H1 (cell line): ENCODE measurements at regions of chr11 and their contacts with region 1.

Region 1: DNA sequence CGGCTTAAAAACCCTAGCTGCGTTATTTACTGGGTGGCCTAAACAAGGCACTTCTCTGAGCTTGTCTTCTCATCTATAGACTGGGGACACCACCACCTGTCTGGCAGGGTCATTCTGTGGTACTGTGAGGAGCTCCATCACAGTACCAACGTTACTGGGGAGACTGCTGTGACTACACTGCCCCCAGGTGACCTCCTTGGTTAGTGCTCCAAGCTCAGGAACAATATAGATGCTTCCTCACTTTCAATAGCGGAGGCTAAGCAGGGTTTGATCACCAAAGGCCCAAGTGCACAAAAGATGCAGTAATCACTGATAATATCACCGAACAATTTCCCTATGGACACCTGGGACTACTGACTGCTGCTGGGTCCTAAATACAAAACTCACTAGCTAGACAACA is 18.8 kb downstream of the PRPF19 start:
- DNase-seq: peak in 1 of 2 experiments; percentile 60
- H3K4me3 ChIP-seq: no peak overlapping the region
- H3K27ac ChIP-seq: no peak overlapping the region
- H3K4me1 ChIP-seq: no peaks in the 10 kb centered on the region
- H3K27me3 ChIP-seq: no peaks in the 10 kb centered on the region
- CTCF ChIP-seq: peak; percentile 54 to 85 (median 84)
- EP300 ChIP-seq: no peak
- POLR2A ChIP-seq: no peak
- RAD21 ChIP-seq: peak; percentile 92 to 93

Region 2: GRCh38 chr11:60725592-60725991 is 162.0 kb before region 1 on chr11:
- CTCF ChIA-PET with region 1: no interaction called
- POLR2A ChIA-PET with region 1: no interaction called
- DNase-seq: no peak
- H3K4me3 ChIP-seq: no peak overlapping the region
- H3K27ac ChIP-seq: no peak overlapping the region
- H3K4me1 ChIP-seq: no peaks in the 10 kb centered on the region
- H3K27me3 ChIP-seq: no peaks in the 10 kb centered on the region; a peak in 2 of 7 replicates
- CTCF ChIP-seq: no peak
- EP300 ChIP-seq: no peak
- POLR2A ChIP-seq: no peak
- RAD21 ChIP-seq: no peak

Region 3: DNA sequence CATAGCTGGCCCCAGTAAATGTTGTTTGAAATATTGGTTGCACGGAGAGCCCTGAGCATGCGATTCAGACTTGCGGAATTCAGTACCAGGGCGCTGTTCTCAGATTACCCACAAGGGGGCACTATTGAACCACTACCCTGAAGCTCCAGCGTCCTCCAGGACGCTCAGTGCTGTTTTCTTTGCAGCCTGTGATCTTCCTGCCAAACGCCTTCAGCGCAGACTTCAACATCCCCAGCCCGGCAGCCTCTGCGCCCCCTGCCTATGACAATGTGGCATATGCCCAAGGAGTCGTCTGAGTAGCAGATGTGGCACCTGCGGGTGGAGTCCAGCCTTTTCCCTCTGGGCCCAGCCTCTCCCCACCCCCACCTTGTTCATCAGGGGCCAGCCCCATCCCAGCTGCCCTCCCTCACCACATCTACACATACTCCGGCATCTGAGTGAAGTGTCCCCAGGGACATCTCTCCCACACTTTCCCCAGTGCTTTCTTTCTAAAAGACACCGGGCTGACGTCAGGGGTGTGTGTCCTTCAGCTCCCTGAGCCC is 112.1 kb before region 1 on chr11:
- CTCF ChIA-PET with region 1: interaction called, 31 read pairs
- POLR2A ChIA-PET with region 1: interaction called, 5 read pairs
- DNase-seq: peak; percentile 90 to 94
- H3K4me3 ChIP-seq: no peak overlapping the region
- H3K27ac ChIP-seq: no peak overlapping the region
- H3K4me1 ChIP-seq: no peaks in the 10 kb centered on the region; a peak in 1 of 7 replicates
- H3K27me3 ChIP-seq: no peaks in the 10 kb centered on the region
- CTCF ChIP-seq: peak; percentile 65 to 96 (median 93)
- EP300 ChIP-seq: no peak
- POLR2A ChIP-seq: no peak
- RAD21 ChIP-seq: peak; percentile 81 to 86

Region 4: GRCh38 chr11:60821827-60822599 is 65.5 kb before region 1 on chr11:
- CTCF ChIA-PET with region 1: interaction called, 522 read pairs
- POLR2A ChIA-PET with region 1: no interaction called
- DNase-seq: no peak
- H3K4me3 ChIP-seq: no peak overlapping the region
- H3K27ac ChIP-seq: no peak overlapping the region
- H3K4me1 ChIP-seq: no peaks in the 10 kb centered on the region; a peak in 1 of 7 replicates
- H3K27me3 ChIP-seq: no peaks in the 10 kb centered on the region; a peak in 1 of 7 replicates
- CTCF ChIP-seq: no peak
- EP300 ChIP-seq: no peak
- POLR2A ChIP-seq: no peak
- RAD21 ChIP-seq: no peak

Region 5: GRCh38 chr11:60852129-60852981 is 35.2 kb before region 1 on chr11:
- CTCF ChIA-PET with region 1: interaction called, 22 read pairs
- POLR2A ChIA-PET with region 1: interaction called, 4 read pairs
- DNase-seq: peak in 1 of 2 experiments; percentile 60
- H3K4me3 ChIP-seq: peak overlapping the region in 3 of 4 experiments; percentile 2 to 49 (median 5); a peak in 4 of 8 replicates
- H3K27ac ChIP-seq: no peak overlapping the region
- H3K4me1 ChIP-seq: peaks cover 0 to 5% (median 0%) of the 10 kb centered on the region in 4 experiments; a peak in 2 of 7 replicates
- H3K27me3 ChIP-seq: peaks cover 3 to 26% (median 16%) of the 10 kb centered on the region in 4 experiments; a peak in 6 of 7 replicates
- CTCF ChIP-seq: no peak
- EP300 ChIP-seq: no peak
- POLR2A ChIP-seq: no peak
- RAD21 ChIP-seq: no peak

Region 6: DNA sequence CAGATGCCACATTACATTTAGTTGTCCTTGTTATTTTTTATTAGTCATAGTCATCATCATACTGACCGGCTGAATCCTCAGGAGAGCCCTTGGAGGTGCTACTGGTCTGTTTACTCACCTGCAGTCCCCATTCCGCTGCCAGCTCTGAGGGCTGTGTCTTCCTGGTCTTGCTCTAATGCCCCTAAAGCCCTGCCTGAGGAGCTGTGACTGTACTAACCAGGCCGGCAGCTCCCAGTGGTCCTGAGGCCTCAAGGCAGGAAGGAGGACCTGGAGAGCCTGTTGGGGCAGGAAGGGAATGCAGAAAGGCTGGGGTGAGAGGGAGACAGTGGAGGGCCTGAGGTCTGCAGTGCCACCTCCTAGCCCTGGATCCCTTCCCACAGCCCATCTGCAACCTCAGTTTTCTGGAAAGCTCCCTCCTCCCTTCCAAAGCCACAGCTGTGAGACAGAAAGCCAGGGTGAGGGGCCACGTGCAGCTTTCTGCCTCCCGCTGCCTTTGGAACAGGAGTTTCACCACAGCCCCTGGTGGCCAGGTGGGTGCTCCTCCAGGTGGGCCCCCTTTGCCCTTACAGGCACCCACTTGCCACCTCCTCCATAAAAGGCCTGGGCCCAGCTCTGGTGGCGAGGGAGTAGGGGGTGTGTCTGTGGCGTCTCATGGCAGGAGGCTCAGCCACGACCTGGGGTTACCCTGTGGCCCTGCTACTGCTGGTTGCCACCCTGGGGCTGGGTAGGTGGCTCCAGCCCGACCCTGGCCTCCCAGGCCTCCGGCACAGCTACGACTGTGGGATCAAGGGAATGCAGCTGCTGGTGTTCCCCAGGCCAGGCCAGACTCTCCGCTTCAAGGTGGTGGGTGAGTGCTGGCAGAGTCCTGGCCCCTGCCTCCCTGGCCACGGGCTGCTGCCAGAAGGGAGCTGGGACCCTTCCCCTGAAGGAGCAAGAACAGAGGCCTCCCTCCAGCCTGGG is 20.4 kb before region 1 on chr11 and contains the start of gene ZP1:
- CTCF ChIA-PET with region 1: interaction called, 52 read pairs
- POLR2A ChIA-PET with region 1: interaction called, 3 read pairs
- DNase-seq: no peak
- H3K4me3 ChIP-seq: no peak within 1 kb of the TSS
- H3K27ac ChIP-seq: no peak within 1 kb of the TSS
- H3K4me1 ChIP-seq: no peaks in the 10 kb centered on the region; a peak in 2 of 7 replicates
- H3K27me3 ChIP-seq: no peaks in the 10 kb centered on the region
- CTCF ChIP-seq: no peak
- EP300 ChIP-seq: no peak
- POLR2A ChIP-seq: no peak
- RAD21 ChIP-seq: no peak
- total RNA-seq, gene ZP1: not detected in 2 replicates

Region 7: DNA sequence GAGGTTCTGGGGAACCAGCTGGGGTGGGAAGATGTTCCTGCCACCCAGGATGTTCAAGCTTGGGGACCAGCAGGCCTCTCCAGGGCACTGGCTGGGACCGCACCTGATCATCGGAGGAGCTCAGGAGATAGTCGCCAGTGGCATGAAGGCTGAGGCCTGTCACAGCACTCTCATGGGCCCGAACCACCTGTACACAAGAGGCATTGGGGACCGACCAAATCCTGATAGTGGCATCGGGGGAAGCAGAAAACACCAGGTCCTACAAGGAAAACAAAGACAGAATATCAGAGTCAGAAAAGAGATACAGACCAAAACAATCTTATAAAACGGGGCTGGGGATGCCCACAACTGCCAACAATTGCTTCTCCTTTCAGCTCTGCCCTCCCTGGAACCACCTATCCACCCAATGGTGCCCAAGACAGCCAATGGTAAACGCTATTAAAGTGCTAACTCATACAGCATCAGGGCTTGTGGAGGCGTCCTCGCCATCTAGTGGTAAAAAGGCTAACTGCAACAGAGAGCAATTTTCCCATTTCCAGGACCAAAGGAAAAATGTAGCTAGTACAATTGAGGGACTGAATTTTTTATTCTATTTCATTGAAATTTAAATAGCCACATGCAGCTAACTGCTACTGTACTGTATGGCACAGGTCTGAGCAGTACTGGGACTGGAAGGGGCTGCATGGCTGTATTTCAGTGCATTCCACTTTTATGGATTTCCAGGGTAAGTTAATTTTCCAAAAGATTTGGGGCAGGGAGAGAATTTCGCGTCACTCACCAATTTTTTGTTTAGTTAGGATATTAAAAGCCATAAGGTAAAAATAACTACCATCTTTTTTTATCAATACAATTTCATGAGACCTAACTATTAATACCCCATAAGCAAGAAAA is 11.7 kb after region 1 on chr11:
- CTCF ChIA-PET with region 1: interaction called, 60 read pairs
- POLR2A ChIA-PET with region 1: interaction called, 18 read pairs
- DNase-seq: peak in 1 of 2 experiments; percentile 57
- H3K4me3 ChIP-seq: no peak overlapping the region
- H3K27ac ChIP-seq: 0 out of 2 replicates have a peak overlapping the region, but pooled peaks have one; percentile 42
- H3K4me1 ChIP-seq: peaks cover 0 to under 1% (median 0%) of the 10 kb centered on the region in 4 experiments; a peak in 1 of 7 replicates
- H3K27me3 ChIP-seq: no peaks in the 10 kb centered on the region
- CTCF ChIP-seq: peak; percentile 21 to 91 (median 74)
- EP300 ChIP-seq: no peak
- POLR2A ChIP-seq: no peak
- RAD21 ChIP-seq: peak; percentile 57 to 68